H1 (cell line): ENCODE measurements at regions of chr17 and their contacts with region 1.

Region 1: DNA sequence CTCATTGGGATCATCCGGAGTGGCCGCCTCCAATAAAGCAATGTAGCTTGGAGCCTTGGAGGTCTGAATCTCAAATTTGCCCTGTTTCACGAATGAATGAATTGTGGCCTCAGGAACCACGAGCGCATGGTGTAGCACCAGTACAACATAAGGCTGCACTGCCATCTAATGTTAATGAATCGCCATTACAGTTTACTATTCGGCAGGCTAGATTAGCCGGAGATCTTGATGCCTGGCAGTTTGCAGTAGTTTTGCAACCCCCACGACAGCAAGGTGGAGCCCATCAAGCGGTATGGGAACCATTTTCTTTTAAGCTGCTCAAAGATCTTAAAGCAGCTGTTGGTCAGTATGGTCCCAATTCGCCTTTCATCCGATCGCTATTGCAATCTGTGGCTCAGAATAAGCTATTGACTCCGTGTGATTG is 18.8 kb downstream of the ALOX15B start:
- DNase-seq: peak in 1 of 2 experiments; percentile 56
- H3K4me3 ChIP-seq: peak overlapping the region in 1 of 4 experiments; percentile 34; a peak in 2 of 8 replicates
- H3K27ac ChIP-seq: no peak overlapping the region
- H3K4me1 ChIP-seq: peaks cover 0 to 12% (median 7%) of the 10 kb centered on the region in 4 experiments; a peak in 4 of 7 replicates
- H3K27me3 ChIP-seq: peaks cover 1 to 16% (median 13%) of the 10 kb centered on the region in 4 experiments; a peak in 5 of 7 replicates
- CTCF ChIP-seq: peak in 2 of 3 experiments; percentile 81 to 88; a peak in 3 of 4 replicates
- EP300 ChIP-seq: no peak
- POLR2A ChIP-seq: no peak
- RAD21 ChIP-seq: peak; percentile 92 to 96

Region 2: DNA sequence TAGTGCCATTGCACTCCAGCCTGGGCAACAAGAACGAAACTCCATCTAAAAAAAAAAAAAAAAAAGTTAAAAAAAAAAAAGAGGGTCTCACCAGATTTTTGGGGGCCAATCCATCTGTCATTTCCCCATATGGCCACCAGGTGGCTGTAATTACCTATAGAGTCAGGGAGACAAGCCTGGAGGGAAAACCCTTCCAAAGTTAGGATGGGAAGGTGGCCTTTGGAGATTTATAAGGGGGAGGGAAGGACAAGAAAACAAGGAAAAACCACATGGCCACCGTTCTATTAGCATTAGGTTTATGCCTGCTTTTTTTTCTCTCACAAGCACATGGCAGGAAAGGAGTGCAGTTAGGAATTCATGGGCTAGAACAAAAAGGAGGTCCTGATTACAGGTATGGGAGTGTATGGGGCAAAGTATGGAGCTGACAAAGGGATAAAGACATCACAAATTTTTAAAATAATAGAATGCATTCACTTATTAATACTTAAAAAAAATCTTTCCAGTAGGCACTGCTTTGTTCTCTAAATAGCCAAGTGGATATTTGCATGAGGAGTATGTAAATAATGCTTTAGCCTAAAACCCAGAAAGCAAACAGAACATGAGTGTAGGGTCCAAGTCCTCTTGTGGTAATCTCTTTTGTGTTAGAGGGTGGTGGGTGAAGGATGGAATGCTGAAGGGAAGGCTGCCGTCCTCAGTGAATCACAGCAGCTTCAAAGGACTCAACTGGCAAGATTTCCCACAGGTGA is 194.8 kb before region 1 on chr17:
- CTCF ChIA-PET with region 1: interaction called, 11 read pairs
- POLR2A ChIA-PET with region 1: no interaction called
- DNase-seq: peak in 1 of 2 experiments; percentile 78
- H3K4me3 ChIP-seq: no peak overlapping the region
- H3K27ac ChIP-seq: no peak overlapping the region
- H3K4me1 ChIP-seq: peaks cover 0 to 2% (median 0%) of the 10 kb centered on the region in 4 experiments; a peak in 2 of 7 replicates
- H3K27me3 ChIP-seq: no peaks in the 10 kb centered on the region
- CTCF ChIP-seq: peak; percentile 10 to 80 (median 66)
- EP300 ChIP-seq: no peak
- POLR2A ChIP-seq: no peak
- RAD21 ChIP-seq: peak; percentile 83 to 84

Region 3: DNA sequence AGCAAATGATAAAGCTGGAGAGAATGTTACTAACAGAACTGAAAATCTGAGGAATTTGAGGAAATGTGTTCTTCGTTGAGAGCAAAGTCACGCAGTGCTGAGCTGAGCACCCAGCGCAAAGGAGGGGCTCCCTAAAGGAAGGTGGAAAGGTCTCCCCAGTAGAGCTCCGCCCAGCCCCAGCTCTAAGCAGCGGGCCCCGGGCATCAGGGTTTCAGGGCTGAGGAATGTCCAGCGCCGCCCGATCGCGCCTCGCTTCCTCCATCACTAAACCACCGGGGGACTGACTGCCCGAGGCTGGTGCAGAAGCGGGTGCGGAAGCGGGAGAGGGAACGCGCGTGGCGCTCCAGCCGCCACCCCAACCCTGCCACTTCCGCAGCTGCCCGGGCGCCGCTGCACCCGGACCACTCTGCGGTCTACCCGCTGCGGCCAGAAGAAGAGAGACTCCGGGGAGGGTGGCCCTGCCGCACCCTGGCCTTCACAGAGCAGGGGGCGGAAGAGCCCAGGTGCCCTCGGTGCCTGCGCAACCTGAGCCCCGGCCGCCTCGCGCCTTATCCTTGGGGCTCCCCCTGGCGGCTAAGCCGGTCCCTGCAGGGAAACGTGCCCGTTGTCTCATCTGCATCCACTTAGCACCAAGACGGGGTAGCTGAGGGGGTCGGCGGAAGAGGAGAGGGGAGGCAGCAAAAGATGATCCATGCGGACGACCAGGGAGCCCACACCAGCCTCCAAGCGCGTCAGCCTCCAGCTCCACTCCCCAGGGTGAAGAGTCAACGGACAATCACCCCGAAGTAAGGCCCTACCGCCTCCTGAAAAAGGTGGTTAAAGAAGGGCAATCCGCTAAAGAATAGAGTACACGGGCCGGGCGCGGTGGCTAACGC is 67.7 kb before region 1 on chr17:
- CTCF ChIA-PET with region 1: interaction called, 16 read pairs
- POLR2A ChIA-PET with region 1: interaction called, 3 read pairs
- DNase-seq: peak; percentile 83 to 100
- H3K4me3 ChIP-seq: peak overlapping the region; percentile 53 to 68 (median 63)
- H3K27ac ChIP-seq: no peak overlapping the region
- H3K4me1 ChIP-seq: peaks cover 0 to 2% (median 0%) of the 10 kb centered on the region in 4 experiments; a peak in 1 of 7 replicates
- H3K27me3 ChIP-seq: peaks cover 0 to 16% (median 9%) of the 10 kb centered on the region in 4 experiments; a peak in 4 of 7 replicates
- CTCF ChIP-seq: peak; percentile 93 to 97 (median 97)
- EP300 ChIP-seq: no peak
- POLR2A ChIP-seq: peak in 1 of 2 experiments; percentile 32; a peak in 1 of 3 replicates
- RAD21 ChIP-seq: peak; percentile 62 to 77

Region 4: GRCh38 chr17:8046306-8046928 is 11.3 kb before region 1 on chr17:
- CTCF ChIA-PET with region 1: interaction called, 43 read pairs
- POLR2A ChIA-PET with region 1: no interaction called
- DNase-seq: no peak
- H3K4me3 ChIP-seq: no peak overlapping the region
- H3K27ac ChIP-seq: no peak overlapping the region
- H3K4me1 ChIP-seq: no peaks in the 10 kb centered on the region
- H3K27me3 ChIP-seq: no peaks in the 10 kb centered on the region; a peak in 2 of 7 replicates
- CTCF ChIP-seq: no peak
- EP300 ChIP-seq: no peak
- POLR2A ChIP-seq: no peak
- RAD21 ChIP-seq: no peak

Region 5: GRCh38 chr17:8109661-8110464 is 52.2 kb after region 1 on chr17:
- CTCF ChIA-PET with region 1: interaction called, 116 read pairs
- POLR2A ChIA-PET with region 1: interaction called, 7 read pairs
- DNase-seq: peak in 1 of 2 experiments; percentile 92
- H3K4me3 ChIP-seq: peak overlapping the region; percentile 39 to 69 (median 67)
- H3K27ac ChIP-seq: no peak overlapping the region
- H3K4me1 ChIP-seq: peaks cover 0 to 13% (median 3%) of the 10 kb centered on the region in 4 experiments; a peak in 5 of 7 replicates
- H3K27me3 ChIP-seq: peaks cover 3 to 47% (median 35%) of the 10 kb centered on the region in 4 experiments
- CTCF ChIP-seq: peak; percentile 84 to 94 (median 90)
- EP300 ChIP-seq: no peak
- POLR2A ChIP-seq: no peak
- RAD21 ChIP-seq: peak; percentile 72 to 84

Region 6: DNA sequence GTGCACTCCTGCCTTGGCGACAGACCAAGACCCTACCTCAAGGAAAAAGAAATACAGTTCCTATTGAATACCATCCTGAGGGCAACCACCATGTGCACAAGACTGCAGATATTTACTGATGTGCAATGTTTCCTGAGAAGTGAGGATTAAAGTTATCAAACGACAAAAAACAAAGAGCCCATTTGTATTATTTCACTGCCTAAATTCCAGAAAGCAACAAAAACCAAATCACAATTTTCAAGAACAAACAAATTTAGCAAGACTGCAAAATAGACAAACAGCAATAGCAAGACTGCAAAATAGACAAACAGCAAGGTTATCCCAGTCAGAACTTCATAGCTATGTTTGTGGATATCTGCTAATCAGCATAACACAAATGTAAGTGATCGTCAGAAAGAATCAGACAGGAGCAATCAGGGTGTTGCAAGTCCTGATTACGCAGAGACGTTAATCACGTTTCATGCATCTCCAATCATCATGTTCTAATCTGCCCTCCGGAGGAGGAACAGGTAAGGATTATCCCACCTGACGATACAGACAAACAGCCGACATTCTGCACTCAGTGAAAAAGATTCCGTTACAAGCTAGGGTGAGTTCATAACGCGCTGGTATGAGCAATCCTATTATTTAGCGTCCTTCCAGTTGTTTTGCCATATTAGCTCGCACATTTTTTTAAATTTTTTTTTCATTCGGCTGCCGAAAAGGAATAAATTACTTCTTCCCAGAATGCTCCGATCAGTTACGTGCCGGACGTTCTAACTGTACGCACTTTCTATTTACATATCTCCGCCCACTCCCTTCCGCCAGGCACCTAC is 115.6 kb after region 1 on chr17:
- CTCF ChIA-PET with region 1: interaction called, 3 read pairs
- POLR2A ChIA-PET with region 1: interaction called, 17 read pairs
- DNase-seq: no peak
- H3K4me3 ChIP-seq: peak overlapping the region; percentile 27 to 68 (median 51)
- H3K27ac ChIP-seq: peak overlapping the region; percentile 99
- H3K4me1 ChIP-seq: peaks cover 3 to 13% (median 8%) of the 10 kb centered on the region in 4 experiments
- H3K27me3 ChIP-seq: no peaks in the 10 kb centered on the region
- CTCF ChIP-seq: no peak
- EP300 ChIP-seq: peak in 1 of 2 experiments; percentile 57; a peak in 1 of 3 replicates
- POLR2A ChIP-seq: peak; percentile 100
- RAD21 ChIP-seq: 0 out of 4 replicates have a peak, but pooled peaks of 1 of the 2 experiments have one; percentile 0

Region 7: GRCh38 chr17:8264836-8265542 is 207.3 kb after region 1 on chr17:
- CTCF ChIA-PET with region 1: no interaction called
- POLR2A ChIA-PET with region 1: no interaction called
- DNase-seq: no peak
- H3K4me3 ChIP-seq: no peak overlapping the region
- H3K27ac ChIP-seq: no peak overlapping the region
- H3K4me1 ChIP-seq: no peaks in the 10 kb centered on the region
- H3K27me3 ChIP-seq: no peaks in the 10 kb centered on the region
- CTCF ChIP-seq: no peak
- EP300 ChIP-seq: no peak
- POLR2A ChIP-seq: no peak
- RAD21 ChIP-seq: no peak